Aorta (tissue), 5 donors: ENCODE measurements at regions of chr10 and their contacts with region 1.

Region 1: DNA sequence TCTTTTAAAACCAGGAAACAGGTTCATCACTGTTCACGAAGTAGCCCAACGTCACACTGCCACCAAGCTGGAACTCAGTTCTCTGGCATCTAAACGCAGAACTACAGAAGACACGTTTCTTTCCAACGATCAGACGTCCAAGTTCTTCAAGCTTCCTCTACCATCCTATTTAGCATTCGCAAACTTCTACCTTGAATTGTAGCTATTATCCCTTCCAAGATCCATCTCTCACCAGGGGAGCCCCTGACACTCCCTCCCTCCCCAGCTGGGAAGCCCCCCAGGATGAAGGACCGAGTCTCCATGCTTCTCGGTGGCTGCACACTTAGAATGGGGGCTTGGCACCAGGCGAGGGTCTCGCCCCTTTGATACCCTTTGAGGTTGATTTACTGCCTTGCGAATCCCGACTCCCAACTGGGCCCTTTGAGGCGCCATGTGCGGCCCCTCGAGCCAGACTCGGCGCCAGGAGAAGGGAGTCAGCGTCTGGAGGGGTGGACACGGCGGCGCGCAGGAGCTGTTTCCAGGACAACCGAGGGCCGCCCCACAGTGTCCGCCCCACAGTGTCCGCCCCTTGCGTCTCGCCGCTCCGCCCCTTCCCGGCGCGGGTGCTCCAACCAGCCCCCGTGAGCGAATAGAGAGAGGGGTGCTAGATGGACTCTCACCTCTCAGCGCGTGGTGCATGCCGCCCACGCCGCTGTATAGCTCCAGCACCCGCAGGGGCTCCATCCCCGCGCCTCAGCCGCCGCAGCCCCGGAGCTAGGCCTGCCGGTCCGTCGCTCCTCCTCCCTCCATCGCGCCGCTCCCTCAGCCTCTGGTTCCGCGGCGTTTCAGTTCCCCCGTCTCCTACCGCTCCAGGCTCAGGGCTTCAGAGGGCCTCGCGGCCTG is at the start of gene TRDMT1:
- DNase-seq: peak; percentile 93 to 96
- ATAC-seq: peak; percentile 100
- H3K4me3 ChIP-seq: peak within 1 kb of the TSS; percentile 45 to 84
- H3K27ac ChIP-seq: peak within 1 kb of the TSS; percentile 78 to 97
- H3K4me1 ChIP-seq: peaks cover 0 to 6% of the 10 kb centered on the region in 2 donors
- H3K27me3 ChIP-seq: no peaks in the 10 kb centered on the region
- total RNA-seq, gene TRDMT1: 13.4 to 15.2 TPM

Region 2: DNA sequence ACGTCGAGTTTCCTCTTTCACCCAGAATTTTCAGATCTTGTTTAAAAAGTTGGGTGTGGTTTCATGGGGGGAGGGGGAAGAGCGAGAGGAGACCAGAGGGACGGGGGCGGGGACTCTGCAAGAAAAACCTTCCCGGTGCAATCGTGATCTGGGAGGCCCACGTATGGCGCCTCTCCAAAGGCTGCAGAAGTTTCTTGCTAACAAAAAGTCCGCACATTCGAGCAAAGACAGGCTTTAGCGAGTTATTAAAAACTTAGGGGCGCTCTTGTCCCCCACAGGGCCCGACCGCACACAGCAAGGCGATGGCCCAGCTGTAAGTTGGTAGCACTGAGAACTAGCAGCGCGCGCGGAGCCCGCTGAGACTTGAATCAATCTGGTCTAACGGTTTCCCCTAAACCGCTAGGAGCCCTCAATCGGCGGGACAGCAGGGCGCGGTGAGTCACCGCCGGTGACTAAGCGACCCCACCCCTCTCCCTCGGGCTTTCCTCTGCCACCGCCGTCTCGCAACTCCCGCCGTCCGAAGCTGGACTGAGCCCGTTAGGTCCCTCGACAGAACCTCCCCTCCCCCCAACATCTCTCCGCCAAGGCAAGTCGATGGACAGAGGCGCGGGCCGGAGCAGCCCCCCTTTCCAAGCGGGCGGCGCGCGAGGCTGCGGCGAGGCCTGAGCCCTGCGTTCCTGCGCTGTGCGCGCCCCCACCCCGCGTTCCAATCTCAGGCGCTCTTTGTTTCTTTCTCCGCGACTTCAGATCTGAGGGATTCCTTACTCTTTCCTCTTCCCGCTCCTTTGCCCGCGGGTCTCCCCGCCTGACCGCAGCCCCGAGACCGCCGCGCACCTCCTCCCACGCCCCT is 27.2 kb after region 1 on chr10 and contains the start of gene VIM:
- intact Hi-C with region 1: loop called in 1 of 2 experiments (anchors 2 kb)
- DNase-seq: peak; percentile 98
- ATAC-seq: peak; percentile 90
- H3K4me3 ChIP-seq: peak within 1 kb of the TSS; percentile 47 to 96
- H3K27ac ChIP-seq: peak within 1 kb of the TSS; percentile 91 to 95
- H3K4me1 ChIP-seq: peaks cover 0 to 2% of the 10 kb centered on the region in 2 donors
- H3K27me3 ChIP-seq: no peaks in the 10 kb centered on the region
- total RNA-seq, gene VIM: 3,936 to 5,947 TPM

Region 3: DNA sequence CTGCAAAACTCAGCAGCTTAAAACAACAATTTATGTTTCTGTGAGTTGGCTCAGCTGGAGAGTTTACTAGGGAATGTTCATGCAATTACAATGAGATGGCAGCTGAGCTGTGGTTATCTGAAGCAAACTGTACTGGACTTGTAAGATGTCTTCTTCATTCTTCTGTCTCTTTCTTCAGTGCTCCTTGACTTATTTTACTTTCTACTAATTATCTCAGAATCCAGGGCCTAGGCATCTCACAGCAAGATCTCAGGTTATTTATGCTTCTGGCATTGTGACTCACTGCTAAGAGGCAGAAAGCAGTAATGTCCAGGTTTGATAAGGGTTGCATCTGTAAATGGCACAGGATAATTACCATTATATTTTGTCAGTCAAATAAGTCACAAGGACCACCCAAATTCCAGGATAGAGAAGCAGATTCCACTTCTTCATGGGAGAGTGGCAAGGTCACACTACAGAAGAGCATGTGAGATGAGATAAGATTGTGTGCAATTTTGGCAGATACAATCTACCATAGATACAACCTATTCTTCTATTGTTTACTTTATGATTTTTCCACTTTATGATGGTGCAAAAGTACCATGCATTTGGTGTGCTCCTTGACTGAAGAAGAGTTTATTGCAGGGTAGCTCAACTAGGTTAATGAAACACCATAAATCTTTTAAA is 43.7 kb after region 1 on chr10:
- intact Hi-C with region 1: loop called in 1 of 2 experiments (anchors 5 kb)
- DNase-seq: no peak
- ATAC-seq: no peak
- H3K4me3 ChIP-seq: no peak overlapping the region
- H3K27ac ChIP-seq: no peak overlapping the region
- H3K4me1 ChIP-seq: peaks cover 0 to 4% of the 10 kb centered on the region in 2 donors
- H3K27me3 ChIP-seq: no peaks in the 10 kb centered on the region